CD8-positive, alpha-beta memory T cell (primary cell): ENCODE measurements at regions of chr1 and their contacts with region 1.

Region 1: DNA sequence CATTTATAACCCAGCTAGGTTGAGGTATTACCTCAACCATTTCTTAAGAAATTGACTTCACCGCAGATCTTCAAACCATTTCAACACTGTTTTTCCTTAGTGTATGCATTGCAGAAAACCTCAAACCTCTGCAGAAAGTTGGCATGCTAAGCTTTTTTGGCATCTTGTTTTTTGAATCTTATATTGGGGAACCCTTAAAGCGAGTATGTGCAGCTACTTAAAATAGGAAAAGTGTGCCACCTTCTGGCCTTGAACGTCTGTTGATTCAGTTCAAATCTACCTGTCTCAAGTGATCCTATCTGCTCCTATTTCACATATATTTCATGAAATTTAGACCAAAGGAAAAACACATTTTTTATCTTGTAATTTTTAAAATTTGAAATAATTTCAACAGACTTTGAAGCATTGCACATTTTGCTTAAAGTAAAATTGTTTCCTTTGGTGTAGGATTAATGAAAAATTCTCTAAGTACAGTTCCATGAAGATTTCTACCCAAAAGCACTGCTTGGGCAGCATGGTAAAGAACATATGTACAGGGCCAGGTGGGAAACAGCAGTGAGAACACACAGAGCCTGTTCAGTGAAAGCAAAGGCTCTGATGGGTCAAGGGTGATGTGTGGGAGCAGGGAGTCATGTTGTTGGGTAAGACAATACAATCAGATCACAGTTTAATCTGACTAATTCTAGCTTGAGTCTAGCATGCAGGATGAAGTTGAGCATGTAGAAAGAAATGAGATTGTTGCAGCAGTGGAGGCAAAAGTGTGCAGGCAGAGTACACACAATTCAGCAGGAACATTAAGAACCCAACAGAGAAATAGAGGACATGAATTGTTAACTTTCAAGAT is 17.2 kb downstream of the HENMT1 start:
- DNase-seq: peak; percentile 21 to 69 (median 59)
- H3K4me3 ChIP-seq: no peak overlapping the region
- H3K4me3 Mint-ChIP-seq: peak overlapping the region in 6 of 7 donors; percentile 2 to 92 (median 44)
- H3K27ac ChIP-seq: no peak overlapping the region
- H3K27ac Mint-ChIP-seq: peak overlapping the region; percentile 95 to 100 (median 98)
- H3K4me1 ChIP-seq: peaks cover 67% of the 10 kb centered on the region
- H3K4me1 Mint-ChIP-seq: peaks cover 73 to 83% (median 82%) of the 10 kb centered on the region in 3 donors
- H3K27me3 ChIP-seq: no peaks in the 10 kb centered on the region
- H3K27me3 Mint-ChIP-seq: no peaks in the 10 kb centered on the region

Region 2: GRCh38 chr1:108512239-108512981 is 131.3 kb before region 1 on chr1:
- CTCF ChIA-PET with region 1: interaction called, 57 read pairs
- POLR2A ChIA-PET with region 1: interaction called, 7 read pairs
- DNase-seq: peak in 2 of 5 donors; percentile 37 to 48
- H3K4me3 ChIP-seq: no peak overlapping the region
- H3K4me3 Mint-ChIP-seq: no peak overlapping the region
- H3K27ac ChIP-seq: no peak overlapping the region
- H3K27ac Mint-ChIP-seq: no peak overlapping the region
- H3K4me1 ChIP-seq: no peaks in the 10 kb centered on the region
- H3K4me1 Mint-ChIP-seq: no peaks in the 10 kb centered on the region
- H3K27me3 ChIP-seq: no peaks in the 10 kb centered on the region
- H3K27me3 Mint-ChIP-seq: peaks cover 2 to 7% of the 10 kb centered on the region in 2 donors

Region 3: DNA sequence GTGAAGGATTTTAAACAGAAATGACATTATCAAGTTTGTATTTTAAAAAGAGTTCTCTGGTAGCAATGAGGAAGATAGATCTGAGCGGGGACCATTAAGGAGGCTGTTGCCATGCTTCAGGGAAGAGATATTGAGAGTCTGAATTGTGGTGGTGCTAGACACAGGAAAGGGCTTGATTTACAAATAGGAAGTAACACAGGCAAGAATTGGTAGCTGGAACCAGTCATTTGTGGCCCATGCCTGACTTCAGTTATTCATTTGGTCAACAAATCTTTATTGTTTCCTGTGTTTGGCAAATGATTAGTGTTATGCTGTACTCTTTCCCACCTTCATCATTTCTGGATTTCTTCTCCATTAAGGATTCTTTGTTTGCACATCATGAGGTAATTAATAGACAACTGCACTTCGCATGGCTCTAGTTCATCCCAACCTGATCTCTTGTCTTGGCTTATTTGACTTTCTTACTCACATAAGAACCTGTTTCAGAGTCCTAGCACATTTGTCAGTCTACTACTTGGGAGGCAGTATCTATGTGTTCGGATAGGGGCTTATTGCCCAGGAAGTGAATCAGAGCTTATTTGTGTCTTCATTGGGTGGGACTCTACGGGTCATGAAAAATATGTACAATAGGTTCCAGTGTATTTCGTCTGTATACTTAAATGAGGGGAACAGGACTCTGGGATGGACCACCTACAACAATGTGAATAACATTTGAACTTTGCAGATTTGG is 51.5 kb before region 1 on chr1:
- CTCF ChIA-PET with region 1: no interaction called
- POLR2A ChIA-PET with region 1: no interaction called
- DNase-seq: peak in 1 of 5 donors; percentile 26
- H3K4me3 ChIP-seq: no peak overlapping the region
- H3K4me3 Mint-ChIP-seq: peak overlapping the region in 5 of 7 donors; percentile 1 to 45 (median 8)
- H3K27ac ChIP-seq: no peak overlapping the region
- H3K27ac Mint-ChIP-seq: peak overlapping the region; percentile 72 to 97 (median 89)
- H3K4me1 ChIP-seq: peaks cover 29% of the 10 kb centered on the region
- H3K4me1 Mint-ChIP-seq: peaks cover 22 to 67% (median 43%) of the 10 kb centered on the region in 3 donors
- H3K27me3 ChIP-seq: no peaks in the 10 kb centered on the region
- H3K27me3 Mint-ChIP-seq: no peaks in the 10 kb centered on the region

Region 4: GRCh38 chr1:108661030-108661620 is 17.4 kb after region 1 on chr1 and contains the start of gene HENMT1:
- CTCF ChIA-PET with region 1: interaction called, 42 read pairs
- POLR2A ChIA-PET with region 1: interaction called, 224 read pairs
- DNase-seq: peak; percentile 65 to 92 (median 88)
- H3K4me3 ChIP-seq: peak within 1 kb of the TSS; percentile 82
- H3K4me3 Mint-ChIP-seq: peak within 1 kb of the TSS; percentile 87 to 95 (median 88)
- H3K27ac ChIP-seq: peak within 1 kb of the TSS; percentile 94
- H3K27ac Mint-ChIP-seq: peak within 1 kb of the TSS; percentile 95 to 100 (median 98)
- H3K4me1 ChIP-seq: peaks cover 16% of the 10 kb centered on the region
- H3K4me1 Mint-ChIP-seq: peaks cover 35 to 63% (median 53%) of the 10 kb centered on the region in 3 donors
- H3K27me3 ChIP-seq: no peaks in the 10 kb centered on the region
- H3K27me3 Mint-ChIP-seq: no peaks in the 10 kb centered on the region
- total RNA-seq, gene HENMT1: 29.6 to 31.3 TPM

Region 5: DNA sequence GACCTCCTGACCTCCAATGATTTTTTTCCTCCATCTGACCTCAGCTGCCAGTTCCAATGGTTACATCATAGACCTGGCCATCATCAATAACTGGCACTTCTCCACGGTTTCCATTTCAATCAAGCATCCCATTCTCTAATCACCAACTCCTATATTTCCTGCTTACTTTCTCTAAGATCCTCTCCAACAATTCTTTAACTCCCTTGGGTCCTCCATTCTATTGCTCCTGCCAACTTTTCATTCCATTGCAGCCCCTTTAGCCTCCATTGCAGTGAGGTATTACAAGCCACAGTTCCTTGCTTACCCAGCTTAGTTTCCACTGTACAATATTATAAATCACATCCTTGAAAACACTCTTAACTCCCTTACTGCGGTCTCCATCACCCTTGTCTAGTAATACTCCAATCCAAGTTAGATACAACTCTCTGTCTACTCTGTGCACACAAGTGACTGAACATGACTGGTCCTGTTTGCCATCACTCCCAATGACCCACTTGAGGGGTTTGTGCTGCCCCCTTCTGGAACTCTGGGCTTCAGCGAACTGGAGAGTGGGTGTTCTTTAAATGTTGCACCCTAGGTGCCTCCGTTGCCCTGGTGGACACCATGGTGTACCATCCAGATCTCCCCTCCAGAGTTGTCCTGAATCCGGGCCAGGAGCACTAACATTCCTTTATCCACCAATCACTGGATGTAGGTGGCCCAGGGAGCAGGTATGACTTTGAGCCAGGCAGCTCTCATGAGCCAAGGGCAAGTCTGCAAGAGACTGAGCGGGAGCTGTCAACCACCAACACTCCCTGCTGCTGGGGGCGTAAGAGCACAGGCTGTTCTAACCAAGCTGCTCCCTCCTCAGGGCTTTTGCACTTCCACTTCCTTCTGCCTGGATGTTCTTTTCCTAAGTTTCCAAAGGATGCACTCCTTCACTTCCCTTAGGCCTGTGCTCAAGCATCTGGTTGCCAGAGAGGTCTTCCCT is 65.3 kb after region 1 on chr1:
- CTCF ChIA-PET with region 1: interaction called, 19 read pairs
- POLR2A ChIA-PET with region 1: interaction called, 3 read pairs
- DNase-seq: peak; percentile 46 to 81 (median 55)
- H3K4me3 ChIP-seq: no peak overlapping the region
- H3K4me3 Mint-ChIP-seq: peak overlapping the region in 1 of 7 donors; percentile 1
- H3K27ac ChIP-seq: no peak overlapping the region
- H3K27ac Mint-ChIP-seq: peak overlapping the region in 5 of 8 donors; percentile 12 to 62 (median 60)
- H3K4me1 ChIP-seq: peaks cover 26% of the 10 kb centered on the region
- H3K4me1 Mint-ChIP-seq: peaks cover 25 to 33% (median 32%) of the 10 kb centered on the region in 3 donors
- H3K27me3 ChIP-seq: no peaks in the 10 kb centered on the region
- H3K27me3 Mint-ChIP-seq: peaks cover 0 to 3% of the 10 kb centered on the region in 2 donors